Activated B cell treated with CpG ODN at 0.5 μM for 24 hours (primary cell): ENCODE measurements at regions of chr9 and their contacts with region 1.

Region 1: GRCh38 chr9:126471084-126471624 is 142.6 kb upstream of the LMX1B start:
- DNase-seq: peak; percentile 61
- ATAC-seq: peak; percentile 77
- H3K4me3 Mint-ChIP-seq: peak overlapping the region; percentile 75
- H3K27ac Mint-ChIP-seq: peak overlapping the region; percentile 92
- H3K4me1 Mint-ChIP-seq: peaks cover 57% of the 10 kb centered on the region
- H3K27me3 Mint-ChIP-seq: no peaks in the 10 kb centered on the region
- CTCF ChIP-seq: no peak

Region 2: DNA sequence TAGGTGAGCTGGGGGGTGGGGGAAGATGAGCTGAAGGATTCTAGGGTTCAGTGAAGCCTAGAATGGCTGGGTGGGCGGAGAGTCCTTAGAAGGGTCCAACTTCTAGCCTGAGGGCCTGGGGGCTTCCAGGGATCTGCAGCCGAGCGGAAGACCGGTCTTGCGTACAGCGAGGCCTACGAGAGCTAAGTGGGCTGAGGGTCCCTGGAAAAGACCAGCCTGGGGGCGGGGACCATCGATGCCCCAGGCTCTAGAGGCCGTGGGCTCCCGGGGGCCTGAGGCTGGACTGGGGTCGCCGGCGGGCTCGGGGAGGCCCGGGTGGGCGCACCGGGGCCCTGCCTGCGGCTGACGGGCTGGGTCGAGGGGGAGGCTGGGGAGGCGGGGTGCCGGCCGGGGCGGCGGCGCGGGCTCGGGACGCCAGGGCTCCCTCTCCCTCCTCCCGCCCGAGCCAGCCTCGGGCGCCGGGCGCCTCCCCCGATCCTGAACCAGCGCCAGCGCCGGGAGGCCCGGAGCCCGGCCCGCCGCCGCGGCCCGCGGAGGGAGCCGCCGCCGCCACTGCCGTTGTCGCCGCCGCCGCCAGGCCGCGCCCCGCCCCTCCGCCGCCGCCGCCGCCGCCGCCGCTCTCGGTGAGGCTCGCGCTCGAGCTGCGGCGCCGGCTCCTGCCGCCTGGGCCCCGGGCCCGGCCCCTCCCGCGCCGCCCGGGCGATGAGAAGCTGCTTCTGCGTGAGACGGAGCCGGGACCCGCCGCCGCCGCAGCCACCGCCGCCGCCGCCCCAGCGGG is 144.7 kb before region 1 on chr9 and contains the start of gene MVB12B:
- CTCF ChIA-PET with region 1: no interaction called
- POLR2A ChIA-PET with region 1: interaction called, 3 read pairs
- intact Hi-C with region 1: loop called (anchors 5 kb)
- DNase-seq: peak; percentile 64
- ATAC-seq: peak; percentile 83
- H3K4me3 Mint-ChIP-seq: peak within 1 kb of the TSS; percentile 79
- H3K27ac Mint-ChIP-seq: peak within 1 kb of the TSS; percentile 68
- H3K4me1 Mint-ChIP-seq: peaks cover 18% of the 10 kb centered on the region
- H3K27me3 Mint-ChIP-seq: peaks cover 11% of the 10 kb centered on the region
- CTCF ChIP-seq: no peak
- total RNA-seq, gene MVB12B: 2.3 and 2.5 TPM in 2 replicates

Region 3: GRCh38 chr9:126411225-126411947 is 59.8 kb before region 1 on chr9:
- CTCF ChIA-PET with region 1: no interaction called
- POLR2A ChIA-PET with region 1: no interaction called
- intact Hi-C with region 1: loop called (anchors 2 kb)
- DNase-seq: no peak
- ATAC-seq: peak; percentile 88
- H3K4me3 Mint-ChIP-seq: peak overlapping the region; percentile 81
- H3K27ac Mint-ChIP-seq: peak overlapping the region; percentile 85
- H3K4me1 Mint-ChIP-seq: peaks cover 35% of the 10 kb centered on the region
- H3K27me3 Mint-ChIP-seq: no peaks in the 10 kb centered on the region
- CTCF ChIP-seq: no peak

Region 4: GRCh38 chr9:126482361-126483044 is 11.3 kb after region 1 on chr9:
- CTCF ChIA-PET with region 1: no interaction called
- POLR2A ChIA-PET with region 1: interaction called, 17 read pairs
- intact Hi-C with region 1: no loop called
- DNase-seq: no peak
- ATAC-seq: no peak
- H3K4me3 Mint-ChIP-seq: peak overlapping the region; percentile 19
- H3K27ac Mint-ChIP-seq: no peak overlapping the region
- H3K4me1 Mint-ChIP-seq: peaks cover 16% of the 10 kb centered on the region
- H3K27me3 Mint-ChIP-seq: no peaks in the 10 kb centered on the region
- CTCF ChIP-seq: no peak